Activated CD4-positive, alpha-beta T cell treated with anti-CD3 and anti-CD28 coated beads for 36 hours (primary cell): ENCODE measurements at regions of chr5 and their contacts with region 1.

Region 1: GRCh38 chr5:40386289-40386688 is 293.4 kb upstream of the PTGER4 start:
- DNase-seq: peak; percentile 39
- ATAC-seq: peak; percentile 11
- H3K4me3 Mint-ChIP-seq: no peak overlapping the region
- H3K27ac Mint-ChIP-seq: peak overlapping the region; percentile 92
- H3K4me1 Mint-ChIP-seq: peaks cover 86% of the 10 kb centered on the region
- H3K27me3 Mint-ChIP-seq: no peaks in the 10 kb centered on the region

Region 2: DNA sequence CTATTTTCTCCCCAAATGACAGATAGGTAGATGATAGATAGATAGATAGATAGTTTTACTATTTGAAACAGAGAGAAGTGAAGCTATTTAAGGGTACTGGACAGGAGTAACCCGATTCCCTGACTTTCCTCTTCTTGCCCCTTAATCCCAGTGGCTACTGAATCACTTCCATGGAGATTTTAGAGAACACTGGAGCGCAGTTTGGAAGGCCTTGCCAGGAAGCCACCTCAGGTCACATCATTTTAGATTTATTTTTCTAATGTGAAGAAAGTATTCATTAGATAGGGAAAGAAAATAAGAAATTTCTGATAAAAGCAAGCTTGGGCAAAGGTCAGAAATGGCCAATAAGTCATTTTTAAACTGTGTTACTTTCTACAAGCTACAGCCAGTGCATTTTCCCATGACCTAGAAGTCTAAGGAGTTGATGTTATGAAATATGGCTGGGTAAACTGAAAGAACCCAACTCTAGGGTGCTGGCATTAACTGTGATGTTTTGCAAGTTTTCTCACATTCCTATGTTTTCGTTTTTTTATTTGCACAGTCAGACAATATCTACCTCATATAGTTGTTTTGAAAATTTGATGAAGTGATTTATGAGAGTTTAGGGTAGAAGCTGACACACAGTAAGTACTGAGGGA is 251.3 kb before region 1 on chr5:
- CTCF ChIA-PET with region 1: no interaction called
- POLR2A ChIA-PET with region 1: no interaction called
- intact Hi-C with region 1: no loop called
- DNase-seq: no peak
- ATAC-seq: no peak
- H3K4me3 Mint-ChIP-seq: no peak overlapping the region
- H3K27ac Mint-ChIP-seq: no peak overlapping the region
- H3K4me1 Mint-ChIP-seq: peaks cover 4% of the 10 kb centered on the region
- H3K27me3 Mint-ChIP-seq: peaks cover 7% of the 10 kb centered on the region

Region 3: GRCh38 chr5:40333459-40334244 is 52.6 kb before region 1 on chr5:
- CTCF ChIA-PET with region 1: interaction called, 3 read pairs
- POLR2A ChIA-PET with region 1: interaction called, 3 read pairs
- intact Hi-C with region 1: loop called (anchors 1 kb)
- DNase-seq: peak; percentile 49
- ATAC-seq: peak; percentile 96
- H3K4me3 Mint-ChIP-seq: no peak overlapping the region
- H3K27ac Mint-ChIP-seq: no peak overlapping the region
- H3K4me1 Mint-ChIP-seq: peaks cover 41% of the 10 kb centered on the region
- H3K27me3 Mint-ChIP-seq: no peaks in the 10 kb centered on the region

Region 4: DNA sequence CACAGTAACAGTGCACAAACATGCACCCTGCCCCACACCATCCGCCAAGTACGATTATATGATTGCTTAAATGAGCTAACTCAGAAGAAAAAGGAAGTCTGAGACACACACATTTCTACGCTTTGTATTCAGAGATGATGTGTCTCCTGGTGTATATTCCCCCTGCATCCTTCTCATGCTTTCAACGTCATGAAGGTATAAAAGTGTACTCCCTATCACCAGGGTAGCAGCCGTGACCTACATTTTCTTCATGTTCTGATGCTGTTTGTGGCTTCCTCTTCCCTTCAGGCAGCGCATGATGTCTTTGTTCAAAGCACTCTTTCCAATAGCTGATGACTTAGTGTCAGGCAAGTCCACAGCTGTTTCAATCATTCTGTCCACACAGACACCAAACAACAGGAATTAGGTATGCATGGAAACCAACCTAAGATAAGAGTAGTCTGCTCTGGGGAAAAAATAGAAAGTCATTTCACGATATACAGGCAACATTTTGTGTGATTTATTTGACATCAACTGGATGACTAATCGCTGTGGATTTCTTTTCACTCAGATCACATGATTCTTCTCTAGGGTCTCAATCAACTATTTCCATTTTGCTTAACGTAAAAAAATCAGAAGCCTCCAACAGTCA is 24.1 kb after region 1 on chr5:
- CTCF ChIA-PET with region 1: interaction called, 23 read pairs
- POLR2A ChIA-PET with region 1: interaction called, 22 read pairs
- intact Hi-C with region 1: loop called (anchors 1 kb)
- DNase-seq: peak; percentile 80
- ATAC-seq: peak; percentile 82
- H3K4me3 Mint-ChIP-seq: peak overlapping the region; percentile 58
- H3K27ac Mint-ChIP-seq: peak overlapping the region; percentile 94
- H3K4me1 Mint-ChIP-seq: peaks cover 67% of the 10 kb centered on the region
- H3K27me3 Mint-ChIP-seq: no peaks in the 10 kb centered on the region

Region 5: GRCh38 chr5:40578501-40579451 is 192.5 kb after region 1 on chr5:
- CTCF ChIA-PET with region 1: interaction called, 3 read pairs
- POLR2A ChIA-PET with region 1: no interaction called
- intact Hi-C with region 1: loop called (anchors 1 kb)
- DNase-seq: peak; percentile 84
- ATAC-seq: peak; percentile 95
- H3K4me3 Mint-ChIP-seq: peak overlapping the region; percentile 49
- H3K27ac Mint-ChIP-seq: peak overlapping the region; percentile 72
- H3K4me1 Mint-ChIP-seq: peaks cover 44% of the 10 kb centered on the region
- H3K27me3 Mint-ChIP-seq: no peaks in the 10 kb centered on the region